Activated T-helper 1 cell treated with anti-CD3 and anti-CD28 coated beads, Interleukin-12 subunit alpha, Interleukin-12 subunit beta, Interleukin-2, Interleukin-4 antibody, amounts not matched to agents 30 ng/mL and 10 ng/mL and 1 ng/mL, durations not matched to agents 14 hours and 24 hours and 36 hours (primary cell): ENCODE measurements at regions of chr1 and their contacts with region 1.

Region 1: DNA sequence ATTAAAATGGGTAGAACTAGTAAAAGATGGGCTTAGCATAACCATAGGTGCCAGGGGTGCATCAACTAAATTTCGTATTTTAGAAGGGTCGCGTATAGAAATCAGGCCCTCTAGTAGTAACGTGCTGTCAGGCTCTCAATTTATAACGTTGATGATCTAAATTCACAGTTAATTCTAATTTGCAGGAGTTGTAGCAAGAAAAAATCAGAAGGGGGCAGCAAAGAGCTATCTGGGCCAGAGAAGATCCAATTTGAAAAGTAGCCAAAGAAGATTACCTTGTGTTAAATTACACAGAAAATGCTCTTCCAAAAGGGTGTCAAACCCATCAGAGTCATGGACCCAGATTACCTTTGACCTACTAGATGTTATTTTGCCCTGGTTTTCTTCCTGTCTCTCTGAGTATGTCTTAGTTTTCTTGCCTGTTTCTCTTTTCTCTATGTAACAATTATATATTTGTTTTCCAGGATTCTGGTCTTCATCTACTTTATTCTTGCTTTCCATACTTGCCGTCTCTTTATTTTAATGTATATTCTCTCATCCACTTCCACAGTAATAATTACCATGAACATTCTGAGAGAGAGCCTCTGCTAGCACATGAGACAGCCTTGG is 1030.9 kb downstream of the AMY1C start:
- DNase-seq: no peak
- H3K4me3 Mint-ChIP-seq: no peak overlapping the region
- H3K27ac Mint-ChIP-seq: no peak overlapping the region
- H3K4me1 Mint-ChIP-seq: no peaks in the 10 kb centered on the region
- H3K27me3 Mint-ChIP-seq: no peaks in the 10 kb centered on the region

Region 2: GRCh38 chr1:105793536-105794146 is 1013.1 kb after region 1 on chr1:
- intact Hi-C with region 1: loop called (anchors 5 kb)
- DNase-seq: no peak
- H3K4me3 Mint-ChIP-seq: no peak overlapping the region
- H3K27ac Mint-ChIP-seq: no peak overlapping the region
- H3K4me1 Mint-ChIP-seq: no peaks in the 10 kb centered on the region
- H3K27me3 Mint-ChIP-seq: no peaks in the 10 kb centered on the region